ENCODE measurements at regions of chr18 and their contacts with region 1.

Region 1: DNA sequence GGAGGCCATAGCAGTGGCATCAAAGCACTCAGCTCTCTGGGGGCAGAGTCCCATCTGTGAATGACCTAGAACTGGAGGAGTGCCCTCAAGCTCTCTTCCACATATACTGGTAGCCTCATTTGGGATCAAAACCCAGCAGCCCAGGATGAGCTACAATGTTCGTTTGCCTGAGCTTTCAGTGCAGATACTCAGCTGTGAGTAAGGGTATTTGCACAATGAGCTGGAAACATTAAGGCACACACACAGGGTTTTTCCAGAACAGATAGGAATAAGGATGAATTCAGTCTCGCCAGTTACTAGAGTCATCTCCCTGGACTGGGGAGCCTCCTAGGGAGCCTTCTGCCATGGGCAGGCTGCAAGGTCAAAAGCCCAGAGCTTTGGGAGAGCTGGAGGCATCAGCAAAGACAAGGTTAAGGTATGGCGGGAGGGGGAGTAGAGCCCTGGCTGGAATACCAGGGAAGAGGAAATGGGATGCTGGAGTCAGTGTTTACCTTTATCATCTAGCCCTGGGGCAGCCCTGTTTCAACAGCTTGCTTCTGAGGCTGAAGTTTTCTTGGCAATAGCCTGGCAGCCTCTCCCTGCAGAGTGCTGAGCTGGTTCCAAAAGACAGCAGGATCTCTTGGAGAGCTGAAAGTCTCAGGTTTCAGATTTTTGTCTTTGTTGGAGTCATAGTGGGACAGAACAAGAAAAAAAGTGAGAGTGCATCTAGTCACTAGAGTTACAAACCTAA is 187.7 kb downstream of the LOXHD1 start:
- DNase-seq: no peak

Region 2: DNA sequence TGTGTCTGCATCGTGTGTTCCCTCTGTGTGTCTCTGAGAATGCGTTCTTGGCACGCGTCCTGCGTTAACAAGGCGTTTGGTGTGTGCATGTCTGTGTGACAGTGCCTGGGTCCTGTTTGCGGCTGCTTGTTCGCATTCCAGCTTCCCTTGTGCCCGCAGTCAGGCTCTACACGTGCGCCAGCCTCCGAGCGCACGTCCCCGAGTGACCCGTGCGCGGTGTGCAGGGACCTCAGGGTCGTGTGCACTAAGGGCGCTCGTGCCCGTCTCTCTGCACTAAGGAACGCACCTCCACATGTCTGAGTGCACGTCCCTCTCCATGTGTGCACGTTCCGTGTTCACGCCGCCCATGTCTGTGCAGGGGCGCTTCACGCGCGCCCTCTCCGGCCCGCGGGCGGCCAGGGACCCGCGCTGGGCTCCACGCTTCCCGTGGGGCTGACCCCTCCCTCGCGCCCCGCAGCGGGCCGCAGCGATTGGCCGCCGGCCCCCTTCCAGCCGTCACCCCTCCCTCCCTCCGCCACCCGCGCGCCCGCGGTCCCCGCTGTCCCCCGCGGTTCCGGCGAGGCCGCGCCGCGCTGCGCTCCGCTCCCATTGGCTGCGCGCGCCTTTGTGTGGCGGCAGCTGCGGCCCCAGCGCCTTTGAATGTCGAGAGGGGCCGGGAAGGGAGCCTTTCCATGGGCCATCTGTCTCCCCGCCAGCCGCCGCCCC is 135.8 kb before region 1 on chr18:
- intact Hi-C with region 1: loop called in 1 of 2 experiments (anchors 10 kb)
- DNase-seq: no peak

Region 3: GRCh38 chr18:46497129-46497528 is 27.8 kb after region 1 on chr18:
- intact Hi-C with region 1: no loop called
- DNase-seq: no peak

Measured in posterior vena cava (tissue), 2 donors.